ENCODE measurements at regions of chr22 and their contacts with region 1.

Region 1: GRCh38 chr22:25702040-25702439 is 39.9 kb upstream of the MYO18B start:
- DNase-seq: no peak
- ATAC-seq: no peak
- H3K4me3 Mint-ChIP-seq: no peak overlapping the region
- H3K27ac Mint-ChIP-seq: no peak overlapping the region
- H3K4me1 Mint-ChIP-seq: no peaks in the 10 kb centered on the region
- H3K27me3 Mint-ChIP-seq: no peaks in the 10 kb centered on the region
- CTCF ChIP-seq: no peak

Region 2: GRCh38 chr22:25465949-25466348 is 236.1 kb before region 1 on chr22:
- CTCF ChIA-PET with region 1: interaction called, 11 read pairs
- POLR2A ChIA-PET with region 1: no interaction called
- DNase-seq: no peak
- ATAC-seq: no peak
- H3K4me3 Mint-ChIP-seq: no peak overlapping the region
- H3K27ac Mint-ChIP-seq: no peak overlapping the region
- H3K4me1 Mint-ChIP-seq: peaks cover 3% of the 10 kb centered on the region; the same call in 1 of the 2 replicates
- H3K27me3 Mint-ChIP-seq: no peaks in the 10 kb centered on the region
- CTCF ChIP-seq: no peak